ENCODE measurements at regions of chr3 and their contacts with region 1.

Region 1: GRCh38 chr3:57227204-57227929 is at the start of gene APPL1:
- DNase-seq: peak; percentile 90
- H3K4me3 Mint-ChIP-seq: peak within 1 kb of the TSS; percentile 90
- H3K27ac Mint-ChIP-seq: peak within 1 kb of the TSS; percentile 85
- H3K4me1 Mint-ChIP-seq: peaks cover 33% of the 10 kb centered on the region
- H3K27me3 Mint-ChIP-seq: peaks cover 2% of the 10 kb centered on the region
- total RNA-seq, gene APPL1: 40.7 and 43.8 TPM in 2 replicates

Region 2: GRCh38 chr3:56693750-56694149 is 533.6 kb before region 1 on chr3:
- intact Hi-C with region 1: loop called (anchors 2 kb)
- DNase-seq: no peak
- H3K4me3 Mint-ChIP-seq: peak overlapping the region; percentile 18
- H3K27ac Mint-ChIP-seq: no peak overlapping the region
- H3K4me1 Mint-ChIP-seq: peaks cover 37% of the 10 kb centered on the region
- H3K27me3 Mint-ChIP-seq: no peaks in the 10 kb centered on the region

Region 3: GRCh38 chr3:56997675-56998074 is 229.7 kb before region 1 on chr3:
- intact Hi-C with region 1: loop called (anchors 10 kb)
- DNase-seq: no peak
- H3K4me3 Mint-ChIP-seq: no peak overlapping the region
- H3K27ac Mint-ChIP-seq: no peak overlapping the region
- H3K4me1 Mint-ChIP-seq: peaks cover 3% of the 10 kb centered on the region
- H3K27me3 Mint-ChIP-seq: peaks cover 8% of the 10 kb centered on the region

Region 4: DNA sequence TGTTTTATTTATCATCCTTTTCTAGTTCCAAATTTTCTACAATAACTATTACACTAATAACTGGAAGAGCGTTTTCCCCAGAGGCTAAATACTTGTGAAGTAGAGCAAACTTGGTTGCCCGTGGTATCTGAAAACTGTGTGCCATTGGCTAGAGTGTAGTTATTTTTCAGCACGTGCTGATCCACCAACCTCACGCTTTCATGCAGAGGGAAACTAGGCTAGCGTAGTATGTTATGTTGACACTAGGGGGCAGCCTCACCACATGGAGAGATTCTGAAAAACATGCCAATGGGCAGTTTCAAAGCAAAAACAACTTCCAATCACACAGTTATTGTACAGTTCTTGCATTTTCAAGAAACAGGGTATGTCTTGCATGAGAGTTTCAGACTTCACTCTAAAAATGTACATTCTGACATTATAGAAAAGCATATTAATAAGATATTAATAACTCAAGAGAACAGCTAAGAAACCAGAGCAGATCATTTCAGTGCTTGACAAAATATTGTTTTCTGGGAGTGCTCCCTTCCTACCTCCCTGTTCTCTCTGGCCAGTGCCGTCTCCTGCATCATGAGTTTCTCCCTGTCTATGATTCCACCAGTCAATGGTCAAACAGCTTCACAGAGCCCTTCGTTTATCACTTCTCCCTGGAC is 127.2 kb before region 1 on chr3:
- intact Hi-C with region 1: loop called (anchors 10 kb)
- DNase-seq: peak; percentile 38
- H3K4me3 Mint-ChIP-seq: no peak overlapping the region
- H3K27ac Mint-ChIP-seq: no peak overlapping the region
- H3K4me1 Mint-ChIP-seq: no peaks in the 10 kb centered on the region
- H3K27me3 Mint-ChIP-seq: peaks cover 6% of the 10 kb centered on the region

Region 5: DNA sequence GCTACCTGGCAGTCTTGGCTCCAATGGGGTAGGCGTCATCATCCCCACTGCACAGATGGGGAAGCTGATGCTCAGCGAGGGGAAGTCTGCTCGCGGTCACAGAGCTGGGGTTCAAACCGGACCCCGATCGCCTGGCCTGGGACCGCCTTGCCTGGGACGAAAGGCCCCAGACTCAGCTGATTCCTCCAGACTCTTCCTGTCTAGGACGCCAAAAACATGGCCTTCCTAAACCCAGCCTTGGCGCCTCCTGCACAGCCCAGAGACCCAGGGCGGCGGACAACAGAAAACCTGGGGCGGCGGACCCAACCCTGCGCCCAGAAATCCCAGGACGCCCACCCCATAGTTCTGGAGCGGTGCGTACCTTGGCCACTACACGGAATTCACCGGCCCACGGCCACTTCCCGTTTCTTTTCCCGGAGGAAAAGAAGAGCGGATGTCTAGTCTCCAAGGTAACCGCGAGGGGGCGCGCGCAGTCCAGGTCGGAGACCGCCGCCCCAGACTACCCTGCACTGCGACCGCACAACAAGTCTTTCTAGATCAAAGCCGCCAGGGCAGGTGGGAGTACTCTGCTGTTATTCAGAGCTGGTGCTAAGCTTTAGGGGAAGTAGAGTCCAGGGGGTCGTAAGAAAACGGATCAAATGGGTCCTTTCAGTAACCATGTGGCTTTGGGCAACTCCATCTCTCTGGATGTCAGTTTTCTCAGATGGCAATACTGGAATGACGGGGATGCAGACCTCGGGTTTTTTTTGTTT is 57.3 kb before region 1 on chr3:
- intact Hi-C with region 1: loop called (anchors 5 kb)
- DNase-seq: peak; percentile 40
- H3K4me3 Mint-ChIP-seq: peak overlapping the region; percentile 60
- H3K27ac Mint-ChIP-seq: no peak overlapping the region
- H3K4me1 Mint-ChIP-seq: peaks cover 2% of the 10 kb centered on the region
- H3K27me3 Mint-ChIP-seq: peaks cover 56% of the 10 kb centered on the region

Region 6: GRCh38 chr3:57597122-57597923 is 370.0 kb after region 1 on chr3 and contains the start of gene ARF4:
- intact Hi-C with region 1: loop called (anchors 1 kb)
- DNase-seq: peak; percentile 100
- H3K4me3 Mint-ChIP-seq: peak within 1 kb of the TSS; percentile 97
- H3K27ac Mint-ChIP-seq: peak within 1 kb of the TSS; percentile 100
- H3K4me1 Mint-ChIP-seq: peaks cover 32% of the 10 kb centered on the region
- H3K27me3 Mint-ChIP-seq: no peaks in the 10 kb centered on the region
- total RNA-seq, gene ARF4: 93.6 and 95.6 TPM in 2 replicates

Region 7: DNA sequence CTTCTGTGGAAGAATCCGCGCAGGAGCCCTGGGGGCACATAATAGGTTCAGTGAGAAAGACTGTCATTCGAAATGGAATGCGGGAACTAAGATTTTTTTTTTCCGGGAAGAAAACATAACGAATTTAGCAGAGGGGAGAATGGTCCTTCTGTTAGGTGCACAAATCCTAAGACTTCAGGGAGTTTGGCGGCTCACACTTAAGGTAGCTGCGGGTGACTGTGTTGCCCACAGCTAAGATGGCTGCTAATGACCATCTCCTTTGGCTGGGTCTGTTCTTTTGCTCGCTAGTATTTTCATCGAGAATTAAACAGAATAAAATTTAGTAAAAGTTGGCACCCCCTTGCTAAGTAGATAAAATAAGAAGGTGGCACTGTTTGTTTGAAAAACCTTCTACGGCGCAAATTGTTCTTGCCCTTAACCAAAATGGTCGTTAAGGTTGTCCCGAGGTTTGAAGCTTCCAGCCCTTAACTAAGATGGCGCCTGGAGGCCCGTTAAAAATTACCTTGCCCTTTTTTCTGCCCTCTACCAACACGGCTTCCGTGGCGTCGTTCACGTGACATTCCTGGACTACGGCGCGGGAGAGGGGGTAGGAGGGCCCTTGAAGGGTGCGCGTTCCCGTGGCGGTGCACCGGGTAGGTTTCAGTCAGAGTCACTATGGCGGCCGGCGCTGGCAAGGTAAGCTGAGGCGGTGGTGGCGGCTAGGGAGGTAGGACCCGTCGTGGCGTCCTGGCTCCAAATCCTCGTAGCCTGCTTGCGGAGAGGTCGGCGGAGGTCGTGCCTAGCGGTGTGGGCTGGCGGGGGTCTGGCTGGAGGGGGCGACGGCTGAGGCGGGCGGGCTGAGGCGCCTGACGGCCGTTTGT is 528.5 kb after region 1 on chr3 and contains the start of gene SLMAP:
- intact Hi-C with region 1: loop called (anchors 5 kb)
- DNase-seq: peak; percentile 95
- H3K4me3 Mint-ChIP-seq: peak within 1 kb of the TSS; percentile 95
- H3K27ac Mint-ChIP-seq: peak within 1 kb of the TSS; percentile 95
- H3K4me1 Mint-ChIP-seq: peaks cover 26% of the 10 kb centered on the region
- H3K27me3 Mint-ChIP-seq: peaks cover 14% of the 10 kb centered on the region
- total RNA-seq, gene SLMAP: 58.2 TPM in 2 replicates

Measured in activated T-helper 2 cell treated with anti-CD3 and anti-CD28 coated beads, Interferon-gamma antibody, Interleukin-2, Interleukin-4, amounts not matched to agents 10 μg/mL and 5 μg/mL and 100 μg/mL, durations not matched to agents 14 hours and 24 hours and 36 hours (primary cell).